Cardiac septum (tissue), 1 donor: ENCODE measurements at regions of chr3 and their contacts with region 1.

Region 1: DNA sequence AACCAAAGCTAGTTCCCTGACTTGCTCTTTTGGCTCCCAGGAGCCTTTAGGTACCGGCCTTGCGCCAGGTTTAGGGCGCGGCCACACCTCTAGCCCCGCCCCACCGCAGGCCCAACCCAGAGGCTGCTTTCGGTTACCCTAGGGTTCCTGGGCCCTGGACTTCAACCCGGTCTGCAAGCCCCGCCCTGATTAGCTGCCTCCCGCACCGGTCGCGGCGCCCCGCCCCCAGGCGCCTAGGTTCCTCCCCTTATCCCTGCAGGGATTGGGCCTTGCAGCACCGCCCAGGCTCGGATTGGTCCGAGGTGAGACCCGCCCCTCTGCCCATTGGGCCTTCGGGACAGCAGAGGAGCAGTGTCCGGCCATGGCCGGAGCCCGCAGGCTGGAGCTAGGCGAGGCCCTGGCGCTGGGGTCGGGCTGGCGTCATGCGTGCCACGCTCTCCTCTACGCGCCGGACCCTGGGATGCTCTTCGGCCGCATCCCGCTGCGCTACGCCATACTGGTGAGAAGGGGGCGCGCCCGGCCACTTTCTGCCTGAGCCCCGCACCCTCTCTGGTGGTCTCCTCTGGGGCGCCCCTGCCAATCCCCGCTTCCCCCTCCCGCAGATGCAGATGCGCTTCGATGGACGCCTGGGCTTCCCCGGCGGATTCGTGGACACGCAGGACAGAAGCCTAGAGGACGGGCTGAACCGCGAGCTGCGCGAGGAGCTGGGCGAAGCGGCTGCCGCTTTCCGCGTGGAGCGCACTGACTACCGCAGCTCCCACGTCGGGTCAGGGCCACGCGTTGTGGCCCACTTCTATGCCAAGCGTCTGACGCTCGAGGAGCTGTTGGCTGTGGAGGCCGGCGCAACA is at the start of gene NUDT16:
- DNase-seq: peak; percentile 100
- total RNA-seq, gene NUDT16: 46.7 TPM

Region 2: GRCh38 chr3:131072845-131073244 is 308.8 kb before region 1 on chr3:
- intact Hi-C with region 1: loop called (anchors 10 kb)
- DNase-seq: no peak

Region 3: DNA sequence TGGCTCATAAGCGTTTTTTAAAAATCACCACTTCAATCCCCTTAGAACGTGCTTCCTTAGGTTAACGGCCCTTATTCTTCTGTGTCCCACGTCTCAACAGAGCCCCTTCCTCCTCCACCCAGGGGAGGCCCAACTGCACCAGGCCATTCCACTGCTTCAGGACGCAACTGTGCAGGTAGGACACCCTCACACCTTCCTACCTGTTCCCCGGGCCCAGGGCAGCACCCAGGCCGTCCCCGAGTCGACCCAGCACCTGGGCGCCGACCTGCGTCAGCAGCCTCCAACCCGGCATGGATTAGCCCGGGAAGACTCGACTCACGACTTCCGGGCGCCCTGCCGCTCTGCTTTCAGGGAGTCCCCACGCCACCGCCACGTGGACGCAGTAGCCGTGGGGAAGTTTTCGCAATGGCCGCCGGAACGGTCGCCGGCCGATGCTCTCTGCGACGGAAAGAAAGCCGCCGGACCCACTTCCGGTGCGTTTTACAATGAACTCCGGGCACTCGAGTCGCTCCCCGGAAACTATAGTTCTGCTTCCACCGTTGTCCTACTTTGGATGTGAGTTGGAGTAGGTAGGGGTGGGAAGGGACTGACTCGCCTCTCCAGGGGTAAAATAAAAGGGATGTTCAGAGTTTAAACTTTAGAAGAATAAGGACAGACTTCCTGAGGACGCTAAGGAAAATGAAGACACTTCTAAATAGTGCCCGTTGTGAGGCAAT is 121.0 kb after region 1 on chr3 and contains the start of gene MRPL3:
- intact Hi-C with region 1: loop called (anchors 5 kb)
- DNase-seq: peak; percentile 90
- total RNA-seq, gene MRPL3: 47.7 TPM

Region 4: DNA sequence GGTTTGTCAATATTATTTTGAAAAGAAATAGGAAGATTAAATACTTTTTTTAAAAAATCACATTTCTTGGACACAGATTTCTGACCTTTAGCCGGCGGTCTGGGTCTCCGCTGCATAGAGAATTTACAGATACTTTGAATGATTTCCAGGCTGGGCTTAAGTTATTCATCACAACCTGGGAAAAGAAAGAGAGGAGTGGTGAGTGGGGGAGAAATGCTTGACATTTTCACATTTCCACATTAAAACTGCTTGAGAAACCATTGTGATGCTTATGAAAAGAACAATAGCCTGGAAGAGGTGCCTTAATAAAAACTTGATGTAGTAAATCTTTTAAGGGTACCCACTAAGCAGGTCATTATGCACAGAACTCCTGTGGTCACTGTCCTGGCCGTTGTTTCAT is 287.9 kb after region 1 on chr3:
- intact Hi-C with region 1: no loop called
- DNase-seq: no peak